ENCODE measurements at regions of chr11 and their contacts with region 1.

Region 1: GRCh38 chr11:58739725-58740430 is 8.1 kb upstream of the GLYAT start:
- DNase-seq: no peak
- H3K4me3 ChIP-seq: no peak overlapping the region
- H3K27ac ChIP-seq: no peak overlapping the region
- H3K4me1 ChIP-seq: no peaks in the 10 kb centered on the region
- H3K27me3 ChIP-seq: no peaks in the 10 kb centered on the region
- CTCF ChIP-seq: no peak
- EP300 ChIP-seq: no peak
- POLR2A ChIP-seq: no peak

Region 2: DNA sequence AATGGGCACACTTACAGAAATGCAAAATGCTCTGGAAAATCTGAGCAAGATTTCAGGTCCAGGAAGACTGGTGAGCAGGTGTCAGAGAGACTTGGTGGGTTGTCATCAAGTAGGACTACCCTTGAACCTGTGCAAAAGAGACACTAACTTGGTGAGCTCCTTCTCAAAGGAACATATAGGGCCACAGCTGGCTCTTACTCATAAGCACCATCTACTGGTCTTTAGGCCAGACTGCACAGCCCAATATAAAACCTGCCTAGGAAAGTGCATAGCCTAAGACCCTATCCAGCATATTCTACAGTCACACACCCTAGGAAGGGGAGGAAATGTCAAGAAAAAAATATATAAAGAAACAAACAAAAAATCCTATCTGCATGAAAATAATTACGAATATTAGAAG is 453.6 kb before region 1 on chr11:
- intact Hi-C with region 1: loop called in 1 of 4 experiments (anchors 10 kb)
- DNase-seq: no peak
- H3K4me3 ChIP-seq: no peak overlapping the region
- H3K27ac ChIP-seq: no peak overlapping the region
- H3K4me1 ChIP-seq: no peaks in the 10 kb centered on the region
- H3K27me3 ChIP-seq: no peaks in the 10 kb centered on the region
- CTCF ChIP-seq: no peak
- EP300 ChIP-seq: no peak
- POLR2A ChIP-seq: no peak